ENCODE measurements at regions of chr22 and their contacts with region 1.

Region 1: GRCh38 chr22:36659762-36660509 is 43.6 kb downstream of the CACNG2 start:
- DNase-seq: no peak
- H3K4me3 Mint-ChIP-seq: no peak overlapping the region
- H3K27ac Mint-ChIP-seq: no peak overlapping the region
- H3K4me1 Mint-ChIP-seq: no peaks in the 10 kb centered on the region
- H3K27me3 Mint-ChIP-seq: peaks cover 2% of the 10 kb centered on the region

Region 2: GRCh38 chr22:36725356-36726006 is 65.5 kb after region 1 on chr22:
- intact Hi-C with region 1: loop called (anchors 10 kb)
- DNase-seq: no peak
- H3K4me3 Mint-ChIP-seq: no peak overlapping the region
- H3K27ac Mint-ChIP-seq: no peak overlapping the region
- H3K4me1 Mint-ChIP-seq: no peaks in the 10 kb centered on the region
- H3K27me3 Mint-ChIP-seq: peaks cover 12% of the 10 kb centered on the region